MCF 10A (cell line): ENCODE measurements at regions of chr15 and their contacts with region 1.

Region 1: DNA sequence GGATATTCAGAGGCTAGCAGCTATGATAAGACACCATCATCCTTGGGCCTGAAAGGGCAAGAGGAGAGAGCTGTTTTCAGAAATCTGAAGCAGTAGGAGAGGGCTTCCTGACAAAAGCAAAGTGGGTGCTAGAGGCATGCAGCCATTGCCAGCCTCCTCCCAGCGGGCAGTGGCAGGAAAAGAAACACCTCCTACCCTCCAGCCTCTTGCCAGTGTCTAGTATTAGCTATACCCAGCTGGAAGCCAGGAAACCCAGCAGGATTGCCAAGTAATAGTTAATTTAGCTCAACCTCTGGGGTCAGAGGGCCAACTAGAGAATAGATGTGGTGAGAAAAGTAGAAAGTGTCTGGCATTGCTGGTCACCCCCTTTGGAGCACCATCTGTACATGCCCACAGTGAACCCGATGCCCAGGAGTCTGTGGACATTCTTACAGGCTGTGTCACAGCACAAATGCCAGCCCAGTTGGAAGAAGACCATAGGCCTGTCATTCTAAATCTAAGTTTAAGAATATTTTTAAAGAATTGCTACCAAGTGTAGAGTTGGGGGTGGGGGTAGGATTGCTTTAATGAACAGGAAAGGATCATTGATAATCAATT is 85.3 kb downstream of the HCN4 start:
- DNase-seq: no peak
- H3K4me3 Mint-ChIP-seq: no peak overlapping the region
- H3K27ac Mint-ChIP-seq: no peak overlapping the region
- H3K4me1 Mint-ChIP-seq: no peaks in the 10 kb centered on the region
- H3K27me3 Mint-ChIP-seq: no peaks in the 10 kb centered on the region
- CTCF ChIP-seq: no peak

Region 2: DNA sequence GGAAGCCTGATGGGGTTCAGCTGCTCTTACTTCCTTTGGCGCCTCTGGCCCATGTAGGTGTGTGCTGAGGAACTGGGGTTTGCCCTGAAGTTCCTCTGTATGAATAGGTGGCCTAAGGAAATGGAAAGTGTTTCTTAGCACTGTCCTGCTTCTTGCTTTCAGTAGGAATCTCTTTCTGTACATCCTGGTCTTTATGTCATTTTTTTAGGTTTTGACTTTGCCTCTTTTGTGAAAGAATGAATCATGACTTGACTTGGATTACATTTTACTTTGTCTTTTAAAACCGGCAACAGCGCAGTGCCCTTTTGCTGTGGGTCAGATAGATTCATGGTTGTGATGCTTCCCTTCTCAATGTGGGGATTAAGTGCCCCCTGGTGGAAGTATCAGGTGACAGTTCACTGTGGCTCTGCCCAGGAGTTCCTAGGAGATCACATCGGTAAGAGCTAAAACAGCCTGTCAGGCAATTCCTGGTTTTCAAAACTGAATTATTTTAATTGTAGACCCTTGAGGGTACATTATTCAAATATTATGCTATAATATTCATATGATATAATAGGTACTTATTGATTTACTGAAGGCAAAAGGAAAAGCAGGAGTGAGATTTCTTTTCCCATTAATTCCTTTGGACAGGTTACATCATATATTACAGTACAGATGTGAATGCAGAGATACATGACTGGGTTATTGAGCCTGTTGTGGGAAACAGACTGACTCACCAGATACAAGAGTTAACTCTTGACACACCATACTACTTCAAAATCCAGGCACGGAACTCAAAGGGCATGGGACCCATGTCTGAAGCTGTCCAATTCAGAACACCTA is 10.1 kb before region 1 on chr15:
- CTCF ChIA-PET with region 1: interaction called, 16 read pairs
- POLR2A ChIA-PET with region 1: no interaction called
- intact Hi-C with region 1: no loop called
- DNase-seq: peak; percentile 74
- H3K4me3 Mint-ChIP-seq: no peak overlapping the region
- H3K27ac Mint-ChIP-seq: no peak overlapping the region
- H3K4me1 Mint-ChIP-seq: no peaks in the 10 kb centered on the region
- H3K27me3 Mint-ChIP-seq: no peaks in the 10 kb centered on the region
- CTCF ChIP-seq: peak; percentile 71